ENCODE measurements at regions of chr2 and their contacts with region 1.

Region 1: GRCh38 chr2:169141713-169142352 is 72.5 kb downstream of the DHRS9 start:
- DNase-seq: peak; percentile 30
- H3K4me3 Mint-ChIP-seq: no peak overlapping the region
- H3K27ac Mint-ChIP-seq: no peak overlapping the region
- H3K4me1 Mint-ChIP-seq: no peaks in the 10 kb centered on the region
- H3K27me3 Mint-ChIP-seq: peaks cover 5% of the 10 kb centered on the region

Region 2: GRCh38 chr2:169162613-169163012 is 20.8 kb after region 1 on chr2:
- intact Hi-C with region 1: no loop called
- DNase-seq: no peak
- H3K4me3 Mint-ChIP-seq: no peak overlapping the region
- H3K27ac Mint-ChIP-seq: no peak overlapping the region
- H3K4me1 Mint-ChIP-seq: no peaks in the 10 kb centered on the region
- H3K27me3 Mint-ChIP-seq: peaks cover 26% of the 10 kb centered on the region

Region 3: DNA sequence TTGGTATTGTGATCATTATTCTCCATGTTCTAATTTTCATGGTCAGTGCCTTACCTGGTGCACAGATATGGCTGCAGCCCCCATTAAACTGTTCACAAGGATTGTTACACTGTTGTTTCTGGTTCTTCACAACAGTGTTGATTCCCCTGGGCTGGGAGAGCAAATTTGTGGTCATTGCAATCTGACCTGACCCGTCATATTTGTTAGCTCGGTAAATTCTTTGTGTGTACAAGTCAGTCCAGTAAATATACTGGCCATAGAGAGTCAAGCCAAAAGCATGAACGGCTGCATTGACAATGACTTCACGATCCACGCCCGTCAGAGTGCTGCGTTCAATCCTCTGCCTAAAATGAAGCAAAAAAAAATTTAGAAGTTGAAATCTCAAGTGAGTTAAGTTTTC is 62.1 kb after region 1 on chr2:
- intact Hi-C with region 1: no loop called
- DNase-seq: no peak
- H3K4me3 Mint-ChIP-seq: no peak overlapping the region
- H3K27ac Mint-ChIP-seq: no peak overlapping the region
- H3K4me1 Mint-ChIP-seq: no peaks in the 10 kb centered on the region
- H3K27me3 Mint-ChIP-seq: peaks cover 5% of the 10 kb centered on the region

Region 4: DNA sequence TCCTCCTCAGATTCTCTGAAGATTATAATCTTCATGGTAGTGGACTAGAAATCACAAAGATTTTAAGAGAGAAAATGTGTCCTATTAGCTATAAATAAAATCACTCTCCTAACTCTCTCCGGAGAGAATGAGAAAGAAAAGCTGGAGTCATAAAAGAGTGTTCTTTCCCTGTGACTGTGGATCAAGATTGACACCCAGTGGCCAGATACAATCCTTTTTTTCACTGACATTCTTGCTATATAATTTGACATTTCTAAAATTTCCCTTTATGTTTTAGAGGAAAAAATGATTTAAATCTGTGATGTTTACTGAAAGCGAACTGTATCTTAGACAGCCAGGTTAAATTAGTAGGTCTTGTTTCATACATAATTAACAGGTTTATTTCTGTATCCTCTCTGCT is 255.9 kb after region 1 on chr2:
- intact Hi-C with region 1: loop called (anchors 10 kb)
- DNase-seq: no peak
- H3K4me3 Mint-ChIP-seq: no peak overlapping the region
- H3K27ac Mint-ChIP-seq: no peak overlapping the region
- H3K4me1 Mint-ChIP-seq: no peaks in the 10 kb centered on the region
- H3K27me3 Mint-ChIP-seq: peaks cover 10% of the 10 kb centered on the region

Region 5: GRCh38 chr2:170282851-170283250 is 1141.0 kb after region 1 on chr2:
- intact Hi-C with region 1: no loop called
- DNase-seq: no peak
- H3K4me3 Mint-ChIP-seq: no peak overlapping the region
- H3K27ac Mint-ChIP-seq: no peak overlapping the region
- H3K4me1 Mint-ChIP-seq: no peaks in the 10 kb centered on the region
- H3K27me3 Mint-ChIP-seq: peaks cover 36% of the 10 kb centered on the region